ENCODE measurements at regions of chr18 and their contacts with region 1.

Region 1: DNA sequence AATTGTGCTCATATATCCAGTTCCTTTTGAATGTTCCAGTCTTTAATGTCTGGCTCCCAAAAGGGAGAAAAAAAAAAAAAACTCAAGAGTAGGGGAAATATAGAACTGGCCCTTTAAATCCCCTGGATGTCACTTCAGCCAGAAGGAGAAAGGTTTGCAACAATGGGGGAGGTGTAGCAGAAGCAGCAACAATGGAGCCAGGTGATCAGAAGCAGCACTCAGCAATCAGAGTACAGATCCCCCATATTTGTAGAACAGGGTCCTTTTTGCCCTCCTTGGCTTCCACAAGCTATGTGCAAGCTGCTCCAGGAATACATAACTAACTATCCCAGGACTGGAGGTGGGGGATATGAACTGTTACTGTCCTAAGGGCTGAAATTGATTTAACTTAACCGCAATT is 25.8 kb upstream of the ZNF397 start:
- DNase-seq: no peak
- ATAC-seq: no peak
- H3K4me3 ChIP-seq: no peak overlapping the region
- H3K27ac ChIP-seq: no peak overlapping the region
- H3K4me1 ChIP-seq: no peaks in the 10 kb centered on the region
- H3K27me3 ChIP-seq: peaks cover 2% of the 10 kb centered on the region
- CTCF ChIP-seq: no peak
- POLR2A ChIP-seq: no peak
- RAD21 ChIP-seq: no peak

Region 2: DNA sequence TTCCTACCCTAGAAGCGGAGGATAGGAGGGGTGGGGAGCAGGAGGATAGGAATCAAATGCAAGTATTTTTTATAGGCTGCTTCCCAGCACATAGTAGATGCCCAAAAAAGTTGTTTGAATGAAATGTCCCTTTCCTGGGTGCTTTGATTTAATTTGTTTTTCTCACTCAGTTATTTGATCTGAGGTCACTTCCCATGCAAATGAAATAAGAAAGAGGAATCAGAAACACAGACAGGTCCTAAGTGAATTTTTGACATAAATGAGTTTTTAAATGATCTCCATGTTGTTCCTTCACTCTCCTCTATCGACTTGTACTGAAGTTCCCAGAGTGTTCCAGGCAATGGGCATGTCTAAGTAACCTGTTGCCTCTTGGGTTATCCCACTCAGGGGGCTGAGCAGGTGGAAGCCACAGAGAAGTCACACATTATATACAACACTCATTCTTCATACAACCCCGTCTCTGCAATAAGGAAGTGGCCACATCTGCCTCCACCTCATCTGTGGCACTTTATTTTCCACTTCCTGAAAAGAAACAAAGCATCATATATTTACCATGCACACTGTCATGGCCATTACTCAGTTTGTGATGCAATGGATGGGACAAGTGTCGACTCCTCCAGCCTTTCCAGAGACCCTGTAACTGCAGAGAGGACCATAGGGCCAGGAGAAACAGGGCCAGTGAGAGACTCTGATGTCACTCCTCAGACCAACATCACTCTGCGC is 56.1 kb before region 1 on chr18:
- CTCF ChIA-PET with region 1: no interaction called
- POLR2A ChIA-PET with region 1: no interaction called
- dilution Hi-C with region 1: no loop called
- in situ Hi-C with region 1: no loop called
- intact Hi-C with region 1: loop called (anchors 10 kb)
- DNase-seq: no peak
- ATAC-seq: no peak
- H3K4me3 ChIP-seq: no peak overlapping the region
- H3K27ac ChIP-seq: no peak overlapping the region
- H3K4me1 ChIP-seq: peaks cover 5% of the 10 kb centered on the region; the same call in 1 of the 2 replicates
- H3K27me3 ChIP-seq: peaks cover 8% of the 10 kb centered on the region
- CTCF ChIP-seq: no peak
- POLR2A ChIP-seq: no peak
- RAD21 ChIP-seq: no peak

Measured in IMR-90 (cell line).